Psoas muscle (tissue), 8 donors: ENCODE measurements at regions of chr11 and their contacts with region 1.

Region 1: GRCh38 chr11:26199331-26200095 is 132.4 kb upstream of the ANO3 start:
- DNase-seq: no peak
- ATAC-seq: no peak
- H3K4me3 ChIP-seq: no peak overlapping the region
- H3K27ac ChIP-seq: no peak overlapping the region
- H3K4me1 ChIP-seq: no peaks in the 10 kb centered on the region
- H3K27me3 ChIP-seq: no peaks in the 10 kb centered on the region
- CTCF ChIP-seq: no peak

Region 2: DNA sequence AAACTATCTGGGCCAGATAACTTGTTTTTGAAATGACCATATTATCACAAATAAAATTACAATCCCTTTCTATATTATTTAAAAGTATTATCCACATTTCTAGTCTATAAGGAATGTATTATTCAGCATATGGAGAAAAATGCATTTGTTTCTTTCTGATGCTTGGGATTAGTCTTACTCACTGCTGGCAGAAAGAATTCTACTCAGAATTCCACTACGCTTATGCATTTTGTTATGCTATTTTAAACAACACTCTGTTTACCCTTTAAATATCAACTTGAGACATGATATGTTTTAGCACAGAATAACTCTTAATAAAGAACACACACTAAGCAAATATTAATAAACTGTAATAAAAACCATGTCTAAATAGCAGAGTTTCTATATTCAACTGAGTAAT is 54.9 kb after region 1 on chr11:
- intact Hi-C with region 1: loop called in 1 of 2 experiments (anchors 10 kb)
- DNase-seq: no peak
- ATAC-seq: no peak
- H3K4me3 ChIP-seq: no peak overlapping the region
- H3K27ac ChIP-seq: no peak overlapping the region
- H3K4me1 ChIP-seq: no peaks in the 10 kb centered on the region
- H3K27me3 ChIP-seq: peaks cover 0 to 3% (median 0%) of the 10 kb centered on the region in 3 donors
- CTCF ChIP-seq: no peak